ENCODE measurements at regions of chr17 and their contacts with region 1.

Region 1: DNA sequence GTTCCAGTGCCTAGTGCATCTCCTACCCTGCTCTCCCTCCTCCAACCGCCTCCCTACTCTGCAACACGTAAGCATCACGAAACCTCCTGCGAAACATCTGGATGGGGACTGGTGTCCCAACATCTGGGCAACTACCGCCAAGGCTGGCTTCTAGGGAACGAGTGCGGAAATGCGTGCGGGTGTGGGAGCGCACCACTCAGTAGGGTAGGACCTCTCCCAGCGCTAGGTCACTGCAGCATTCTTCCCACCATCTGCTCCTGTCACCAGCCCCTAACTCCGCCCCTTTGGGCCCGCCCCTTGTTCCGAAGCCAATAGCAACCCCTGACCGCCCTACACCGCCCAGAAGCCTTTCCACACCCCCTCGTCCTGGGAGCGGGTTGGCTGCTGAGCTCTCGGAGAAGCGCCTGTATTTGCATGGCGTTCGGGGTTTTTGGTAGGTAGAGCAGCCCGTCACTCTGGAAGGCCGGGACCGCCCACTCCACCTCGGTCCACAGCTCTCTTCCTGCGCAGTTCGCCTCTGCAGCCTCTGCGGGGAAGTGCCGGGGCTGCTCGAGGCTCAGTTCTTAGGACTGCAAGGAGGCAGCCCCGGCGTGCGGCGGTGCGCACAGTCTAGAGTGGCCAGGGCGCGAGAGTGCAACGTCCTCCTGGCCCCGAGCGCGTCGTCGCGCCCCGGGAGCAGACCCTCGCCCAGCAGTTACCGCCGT is at the start of gene HS3ST3B1:
- DNase-seq: peak; percentile 98
- H3K4me3 ChIP-seq: peak within 1 kb of the TSS; percentile 71 to 95 (median 78)
- H3K27ac ChIP-seq: peak within 1 kb of the TSS; percentile 77 to 97 (median 91)
- H3K4me1 ChIP-seq: peaks cover 12 to 92% (median 77%) of the 10 kb centered on the region in 6 donors
- H3K27me3 ChIP-seq: peaks cover 3 to 84% (median 67%) of the 10 kb centered on the region in 7 donors
- CTCF ChIP-seq: peak in 6 of 11 experiments; percentile 29 to 64 (median 45)
- POLR2A ChIP-seq: peak in 2 of 3 donors; percentile 82 to 86
- total RNA-seq, gene HS3ST3B1: 8.2 to 17.9 (median 13.7) TPM

Region 2: GRCh38 chr17:13337864-13338371 is 962.8 kb before region 1 on chr17:
- intact Hi-C with region 1: loop called (anchors 5 kb)
- DNase-seq: no peak
- H3K4me3 ChIP-seq: peak overlapping the region in 3 of 8 donors; percentile 7 to 46 (median 27)
- H3K27ac ChIP-seq: peak overlapping the region in 5 of 8 donors; percentile 20 to 53 (median 34)
- H3K4me1 ChIP-seq: peaks cover 0 to 11% (median 3%) of the 10 kb centered on the region in 6 donors
- H3K27me3 ChIP-seq: peaks cover 0 to 14% (median 0%) of the 10 kb centered on the region in 7 donors
- CTCF ChIP-seq: peak; percentile 14 to 68 (median 51)
- POLR2A ChIP-seq: no peak

Region 3: GRCh38 chr17:13594762-13595598 is 705.7 kb before region 1 on chr17:
- intact Hi-C with region 1: loop called (anchors 5 kb)
- DNase-seq: no peak
- H3K4me3 ChIP-seq: no peak overlapping the region
- H3K27ac ChIP-seq: peak overlapping the region in 3 of 8 donors; percentile 5 to 45 (median 27)
- H3K4me1 ChIP-seq: peaks cover 0 to 55% (median 12%) of the 10 kb centered on the region in 6 donors
- H3K27me3 ChIP-seq: peaks cover 0 to 21% (median 6%) of the 10 kb centered on the region in 7 donors
- CTCF ChIP-seq: peak; percentile 60 to 92 (median 85)
- POLR2A ChIP-seq: no peak

Region 4: GRCh38 chr17:13609936-13610335 is 690.8 kb before region 1 on chr17:
- intact Hi-C with region 1: loop called (anchors 5 kb)
- DNase-seq: no peak
- H3K4me3 ChIP-seq: no peak overlapping the region
- H3K27ac ChIP-seq: no peak overlapping the region
- H3K4me1 ChIP-seq: no peaks in the 10 kb centered on the region
- H3K27me3 ChIP-seq: peaks cover 0 to 15% (median 0%) of the 10 kb centered on the region in 7 donors
- CTCF ChIP-seq: no peak
- POLR2A ChIP-seq: no peak

Measured in spleen (tissue), 13 donors.